Esophagus muscularis mucosa (tissue), 4 donors: ENCODE measurements at regions of chr9 and their contacts with region 1.

Region 1: DNA sequence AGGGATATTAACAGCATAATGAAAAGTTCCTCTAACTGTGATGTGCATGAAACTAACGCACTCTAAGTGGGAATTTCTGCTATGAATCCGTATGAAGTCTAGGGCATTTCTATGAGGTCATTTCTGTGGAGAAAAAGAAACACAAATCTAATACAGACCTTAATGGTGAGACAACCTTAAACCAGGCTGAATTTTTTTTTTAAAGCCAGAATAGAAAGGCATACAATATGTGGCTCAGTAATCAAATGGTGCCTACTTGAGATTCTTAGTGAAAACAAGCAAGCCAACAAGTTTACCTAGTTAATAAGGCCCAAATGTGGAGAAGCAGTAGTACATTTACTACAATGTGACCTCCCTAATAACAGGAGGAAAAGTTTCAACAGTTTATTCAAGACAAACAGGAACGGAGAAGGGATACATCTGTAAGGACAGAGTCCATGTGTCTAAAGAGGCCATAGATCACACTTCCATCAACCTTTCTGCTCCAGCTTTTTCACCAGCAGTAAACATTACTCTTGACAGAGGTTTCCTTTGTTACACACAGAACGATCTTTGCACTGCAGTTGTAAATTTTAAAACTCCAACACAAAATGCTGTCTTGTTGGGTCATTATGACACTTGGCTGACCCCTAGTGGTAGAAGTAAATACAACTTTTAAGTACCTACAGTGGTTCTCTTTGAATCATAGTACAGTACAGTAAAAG is 26.2 kb downstream of the CARNMT1 start:
- DNase-seq: no peak
- H3K4me3 ChIP-seq: no peak overlapping the region
- H3K27ac ChIP-seq: no peak overlapping the region
- H3K4me1 ChIP-seq: peaks cover 0 to 4% (median 2%) of the 10 kb centered on the region in 4 donors
- H3K27me3 ChIP-seq: no peaks in the 10 kb centered on the region
- CTCF ChIP-seq: peak; percentile 68 to 73 (median 70)
- EP300 ChIP-seq: no peak
- POLR2A ChIP-seq: no peak

Region 2: DNA sequence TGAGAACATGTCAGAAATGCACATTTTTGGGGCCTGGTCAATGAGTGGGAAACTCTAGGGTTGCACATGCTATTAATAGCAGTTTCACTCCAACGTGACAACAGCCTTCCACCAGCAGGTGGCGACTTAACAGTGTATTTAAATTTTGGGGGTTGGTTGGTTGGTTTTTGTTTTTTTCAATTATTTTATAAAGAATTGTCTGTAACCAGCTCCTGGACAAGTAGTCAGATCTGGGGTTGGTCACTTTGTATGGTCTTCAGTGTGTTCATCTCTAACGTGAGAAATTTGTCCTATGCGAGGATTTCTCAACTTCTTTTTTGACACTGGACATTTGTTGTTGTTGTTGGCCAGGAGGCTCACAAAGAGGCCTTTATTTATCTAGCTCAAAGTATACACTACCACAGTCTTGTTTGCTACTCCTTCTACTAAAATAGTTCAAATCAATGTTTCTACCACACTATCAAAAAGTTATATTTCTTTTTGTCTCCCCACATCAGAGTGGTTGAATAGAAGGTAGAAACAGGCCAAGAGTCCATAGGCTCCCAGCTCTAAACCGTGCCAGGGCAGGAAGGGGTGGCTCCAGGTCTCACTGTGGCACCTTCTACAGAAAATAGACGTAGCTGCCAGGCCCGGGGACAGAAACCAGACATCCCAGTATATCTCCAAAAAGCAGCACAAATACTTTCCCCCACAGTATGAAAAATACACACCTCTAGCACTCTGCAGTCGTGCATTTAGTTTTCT is 224.6 kb before region 1 on chr9:
- intact Hi-C with region 1: loop called (anchors 1 kb)
- DNase-seq: no peak
- H3K4me3 ChIP-seq: no peak overlapping the region
- H3K27ac ChIP-seq: no peak overlapping the region
- H3K4me1 ChIP-seq: peaks cover 0 to 4% (median 0%) of the 10 kb centered on the region in 4 donors
- H3K27me3 ChIP-seq: peaks cover 0 to 8% (median 0%) of the 10 kb centered on the region in 4 donors
- CTCF ChIP-seq: peak; percentile 71 to 81 (median 80)
- EP300 ChIP-seq: no peak
- POLR2A ChIP-seq: no peak

Region 3: DNA sequence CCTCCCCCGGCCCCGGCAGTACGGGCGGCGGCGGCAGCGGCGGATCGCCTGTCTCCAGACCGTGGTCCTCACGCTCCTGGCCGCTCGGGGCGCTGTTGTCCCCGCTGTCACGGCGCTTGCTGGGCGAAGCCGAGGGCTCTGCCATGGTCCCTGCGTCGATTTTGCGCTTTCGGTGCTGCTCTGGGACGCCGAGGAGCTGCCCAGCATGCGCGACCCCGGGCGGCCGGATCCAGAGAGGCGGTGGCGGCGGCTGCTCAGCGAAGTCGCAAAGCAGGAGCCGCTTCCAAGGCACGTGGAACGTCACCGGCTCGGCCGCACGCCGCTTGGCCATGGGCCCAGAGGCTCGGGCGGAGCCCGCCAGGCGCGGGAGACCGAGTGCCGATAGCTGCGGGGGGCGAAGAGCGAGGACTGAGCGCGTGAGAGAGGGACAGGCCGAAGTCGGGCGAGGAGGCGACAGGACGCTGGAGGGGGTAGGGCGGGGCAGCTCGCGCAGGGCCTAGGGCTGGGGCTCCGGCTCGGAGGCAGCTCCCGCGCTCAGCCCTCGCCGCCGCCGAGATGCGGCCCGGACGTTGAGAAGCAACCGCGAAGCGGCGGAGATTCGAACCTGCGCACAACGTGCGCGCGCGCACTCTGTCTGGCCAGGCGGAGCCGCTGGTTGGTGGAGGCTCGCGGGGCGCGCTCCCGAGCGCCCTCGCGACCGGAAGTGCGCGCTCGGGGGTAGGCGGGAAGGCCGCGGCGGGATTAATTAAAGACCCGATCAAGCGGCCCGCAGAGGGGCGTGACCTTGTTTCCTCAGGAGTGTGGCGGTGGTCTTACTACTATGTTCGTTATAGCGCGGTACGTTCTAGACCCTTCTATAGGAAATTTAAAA is 49.4 kb before region 1 on chr9 and contains the start of gene C9orf40:
- intact Hi-C with region 1: loop called (anchors 5 kb)
- DNase-seq: peak; percentile 93
- H3K4me3 ChIP-seq: peak within 1 kb of the TSS; percentile 81 to 95 (median 92)
- H3K27ac ChIP-seq: peak within 1 kb of the TSS; percentile 96 to 99 (median 98)
- H3K4me1 ChIP-seq: peaks cover 3 to 15% (median 14%) of the 10 kb centered on the region in 4 donors
- H3K27me3 ChIP-seq: no peaks in the 10 kb centered on the region
- CTCF ChIP-seq: peak; percentile 67 to 94 (median 76)
- EP300 ChIP-seq: no peak
- POLR2A ChIP-seq: no peak
- total RNA-seq, gene C9orf40: 4.0 to 6.2 (median 5.5) TPM